ENCODE measurements at regions of chr11 and their contacts with region 1.

Region 1: DNA sequence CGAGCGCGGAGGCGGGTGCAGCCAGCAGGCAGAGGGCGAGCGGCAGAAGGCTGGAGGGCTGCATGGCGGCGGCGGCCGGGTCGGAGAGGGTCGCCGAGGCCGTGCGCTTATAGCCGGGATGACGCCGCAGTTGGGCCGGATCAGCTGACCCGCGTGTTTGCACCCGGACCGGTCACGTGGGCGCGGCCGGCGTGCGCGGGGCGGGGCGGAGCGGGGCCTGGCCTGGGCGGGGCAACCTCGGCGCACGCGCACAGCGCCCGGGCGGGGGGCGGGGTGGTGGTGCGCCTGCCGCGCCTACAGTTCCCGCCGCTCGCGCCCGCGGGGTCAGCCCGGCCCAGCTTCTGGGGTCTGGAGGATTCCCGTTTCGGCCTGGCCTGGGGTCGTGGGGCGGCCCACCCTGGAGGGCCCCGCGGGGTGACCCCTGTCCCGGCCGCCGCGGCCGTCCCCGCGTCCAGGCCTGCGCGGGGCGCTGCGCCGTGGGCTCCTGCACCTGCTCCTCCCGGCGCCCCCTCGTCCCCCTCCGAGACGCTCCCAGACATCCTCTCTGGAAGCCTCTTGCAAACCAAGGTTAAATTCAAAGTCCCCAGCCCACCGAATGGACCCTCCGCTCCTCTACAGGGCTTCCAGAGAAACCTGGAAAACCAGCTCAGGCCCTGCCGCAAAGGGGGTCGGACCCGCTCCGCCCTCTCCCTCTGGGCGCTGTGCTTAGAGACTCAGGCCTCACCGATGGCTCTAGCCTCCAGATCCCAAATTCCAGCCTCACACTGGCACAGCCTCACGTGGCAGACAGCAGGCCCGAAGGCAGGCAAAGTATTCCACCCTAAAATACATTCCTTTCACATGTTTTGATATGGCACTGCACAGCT is at the start of gene CTSD:
- DNase-seq: peak; percentile 88 to 94
- ATAC-seq: peak; percentile 62 to 88 (median 75)
- H3K4me3 ChIP-seq: peak within 1 kb of the TSS; percentile 79 to 100 (median 100)
- H3K27ac ChIP-seq: peak within 1 kb of the TSS; percentile 93 to 99 (median 97)
- H3K4me1 ChIP-seq: peaks cover 29 to 52% (median 51%) of the 10 kb centered on the region in 9 donors
- H3K27me3 ChIP-seq: no peaks in the 10 kb centered on the region
- CTCF ChIP-seq: peak in 2 of 9 donors; percentile 28 to 30
- total RNA-seq, gene CTSD: 501 to 1,070 (median 786) TPM

Region 2: DNA sequence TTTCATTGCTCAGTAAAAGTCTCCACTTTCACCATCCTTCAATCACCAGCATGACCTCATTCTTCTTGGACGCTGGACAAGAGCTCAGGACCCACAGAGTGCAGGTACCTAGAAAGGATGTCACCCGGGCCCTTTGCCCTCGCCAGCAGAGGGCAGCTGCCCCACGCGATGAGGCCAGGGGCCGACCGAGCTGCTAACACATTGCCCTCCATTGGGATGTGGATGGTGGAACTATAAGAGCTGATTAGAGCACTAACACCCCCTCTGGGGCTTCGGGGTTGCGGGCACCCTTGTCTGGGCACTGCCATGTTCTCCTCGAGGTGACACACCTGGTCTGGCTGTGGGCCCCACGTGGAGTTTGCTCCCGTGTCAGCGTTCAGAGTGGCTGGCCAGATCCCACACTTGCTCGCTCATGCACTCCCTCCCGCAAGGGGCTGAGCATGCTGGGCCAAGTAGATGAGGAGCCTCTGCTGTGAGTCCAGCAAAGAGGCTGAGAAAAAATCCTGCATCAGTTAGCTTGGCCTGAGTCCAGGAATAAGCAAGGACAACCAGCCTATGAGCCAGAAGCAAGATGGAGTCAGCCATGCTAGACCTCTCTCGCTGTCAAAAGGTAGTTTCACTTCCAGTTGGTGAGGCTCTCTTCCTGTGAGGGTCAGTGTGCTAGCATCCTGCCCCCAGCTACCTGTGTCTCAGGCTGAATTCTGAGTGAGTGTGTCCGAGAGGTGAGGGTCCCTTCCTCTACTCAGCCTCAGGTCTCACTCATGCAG is 57.2 kb before region 1 on chr11:
- intact Hi-C with region 1: loop called in 3 of 10 experiments (anchors 5 to 10 kb)
- DNase-seq: no peak
- ATAC-seq: peak in 7 of 8 donors; percentile 42 to 85 (median 66)
- H3K4me3 ChIP-seq: no peak overlapping the region
- H3K27ac ChIP-seq: no peak overlapping the region
- H3K4me1 ChIP-seq: no peaks in the 10 kb centered on the region
- H3K27me3 ChIP-seq: peaks cover 0 to 15% (median 0%) of the 10 kb centered on the region in 7 donors
- CTCF ChIP-seq: peak in 7 of 9 donors; percentile 28 to 54 (median 42)

Measured in heart right ventricle (tissue), 16 donors.